ENCODE measurements at regions of chr11 and their contacts with region 1.

Region 1: GRCh38 chr11:2885676-2886081 is at the start of gene CDKN1C:
- DNase-seq: peak; percentile 47 to 71
- H3K4me3 ChIP-seq: peak within 1 kb of the TSS; percentile 55; the same call in 1 of the 2 replicates
- H3K27ac ChIP-seq: no peak within 1 kb of the TSS
- H3K4me1 ChIP-seq: no peaks in the 10 kb centered on the region
- H3K27me3 ChIP-seq: no peaks in the 10 kb centered on the region
- CTCF ChIP-seq: no peak
- total RNA-seq, gene CDKN1C: 5.1 and 7.6 TPM in 2 replicates

Region 2: GRCh38 chr11:2655834-2656622 is 229.7 kb before region 1 on chr11:
- CTCF ChIA-PET with region 1: no interaction called
- POLR2A ChIA-PET with region 1: no interaction called
- intact Hi-C with region 1: no loop called
- DNase-seq: no peak
- H3K4me3 ChIP-seq: no peak overlapping the region
- H3K27ac ChIP-seq: no peak overlapping the region
- H3K4me1 ChIP-seq: no peaks in the 10 kb centered on the region
- H3K27me3 ChIP-seq: no peaks in the 10 kb centered on the region
- CTCF ChIP-seq: no peak

Region 3: DNA sequence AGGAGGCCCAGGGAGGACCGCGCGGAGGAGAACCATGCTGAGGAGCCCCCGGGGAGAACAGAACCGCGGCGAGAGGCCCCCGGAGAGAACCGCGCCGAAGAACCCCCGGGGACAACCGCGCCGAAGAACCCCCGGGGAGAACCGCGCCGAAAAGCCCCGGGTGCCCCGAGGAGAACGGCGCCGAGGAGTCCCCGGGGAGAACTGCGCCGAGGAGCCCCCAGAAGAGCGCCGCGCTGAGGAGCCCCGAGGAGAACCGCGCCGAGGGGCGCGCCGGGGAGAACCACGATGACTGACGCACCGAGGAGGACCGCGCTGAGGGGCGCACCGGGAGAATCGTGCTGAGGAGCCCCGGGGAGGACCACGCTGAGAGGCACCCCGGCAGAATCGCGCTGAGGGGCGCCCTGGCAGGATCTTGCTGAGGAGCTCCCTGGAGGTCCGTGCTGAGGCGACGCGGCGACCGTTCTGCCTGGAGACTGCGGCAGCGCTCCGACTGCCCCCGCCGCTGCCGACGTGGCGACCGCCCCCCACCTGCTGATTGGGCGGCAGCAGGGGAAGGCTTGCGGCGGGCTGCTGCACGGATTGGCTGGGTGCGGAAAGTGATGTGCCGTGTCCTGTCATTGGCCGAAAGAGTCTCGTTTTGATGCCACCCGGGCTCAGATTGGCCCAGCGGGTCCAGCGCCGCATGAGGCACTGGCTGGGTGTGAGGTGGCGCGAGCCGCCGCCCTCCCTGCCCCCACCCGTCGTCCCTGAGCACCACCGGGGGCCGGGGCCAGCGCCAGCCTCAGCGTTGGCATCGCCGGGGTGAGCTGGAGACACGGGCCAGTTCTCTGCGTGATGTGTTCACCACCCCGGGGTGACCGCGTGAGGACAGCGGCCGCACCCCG is 185.9 kb before region 1 on chr11 and contains the start of gene KCNQ1OT1:
- CTCF ChIA-PET with region 1: interaction called, 5 read pairs
- POLR2A ChIA-PET with region 1: no interaction called
- intact Hi-C with region 1: loop called (anchors 2 kb)
- DNase-seq: peak; percentile 87 to 94
- H3K4me3 ChIP-seq: peak within 1 kb of the TSS; percentile 84
- H3K27ac ChIP-seq: peak within 1 kb of the TSS; percentile 79
- H3K4me1 ChIP-seq: peaks cover 14% of the 10 kb centered on the region
- H3K27me3 ChIP-seq: no peaks in the 10 kb centered on the region
- CTCF ChIP-seq: no peak
- total RNA-seq, gene KCNQ1OT1: 3.4 and 4.3 TPM in 2 replicates

Region 4: GRCh38 chr11:2778630-2779498 is 106.8 kb before region 1 on chr11:
- CTCF ChIA-PET with region 1: interaction called, 9 read pairs
- POLR2A ChIA-PET with region 1: no interaction called
- intact Hi-C with region 1: loop called (anchors 1 kb)
- DNase-seq: peak in 1 of 2 experiments; percentile 84
- H3K4me3 ChIP-seq: no peak overlapping the region
- H3K27ac ChIP-seq: no peak overlapping the region
- H3K4me1 ChIP-seq: peaks cover 16% of the 10 kb centered on the region
- H3K27me3 ChIP-seq: no peaks in the 10 kb centered on the region
- CTCF ChIP-seq: no peak

Region 5: GRCh38 chr11:2825889-2826678 is 59.6 kb before region 1 on chr11:
- CTCF ChIA-PET with region 1: no interaction called
- POLR2A ChIA-PET with region 1: no interaction called
- intact Hi-C with region 1: loop called (anchors 5 kb)
- DNase-seq: peak; percentile 75 to 84
- H3K4me3 ChIP-seq: peak overlapping the region; percentile 40; the same call in 1 of the 2 replicates
- H3K27ac ChIP-seq: peak overlapping the region; percentile 67
- H3K4me1 ChIP-seq: peaks cover 19% of the 10 kb centered on the region
- H3K27me3 ChIP-seq: no peaks in the 10 kb centered on the region
- CTCF ChIP-seq: no peak

Region 6: GRCh38 chr11:3412837-3413236 is 527.2 kb after region 1 on chr11:
- CTCF ChIA-PET with region 1: no interaction called
- POLR2A ChIA-PET with region 1: no interaction called
- intact Hi-C with region 1: loop called (anchors 5 kb)
- DNase-seq: no peak
- H3K4me3 ChIP-seq: no peak overlapping the region
- H3K27ac ChIP-seq: no peak overlapping the region
- H3K4me1 ChIP-seq: no peaks in the 10 kb centered on the region
- H3K27me3 ChIP-seq: no peaks in the 10 kb centered on the region
- CTCF ChIP-seq: no peak